ENCODE measurements at regions of chr18 and their contacts with region 1.

Region 1: GRCh38 chr18:12552884-12553242 is 105.0 kb downstream of the SPIRE1 start:
- DNase-seq: no peak
- ATAC-seq: peak in 3 of 4 donors; percentile 25 to 40 (median 30)
- H3K4me3 ChIP-seq: no peak overlapping the region
- H3K27ac ChIP-seq: peak overlapping the region; percentile 19 to 57 (median 38)
- H3K4me1 ChIP-seq: no peaks in the 10 kb centered on the region
- H3K27me3 ChIP-seq: no peaks in the 10 kb centered on the region
- CTCF ChIP-seq: no peak
- POLR2A ChIP-seq: no peak

Region 2: DNA sequence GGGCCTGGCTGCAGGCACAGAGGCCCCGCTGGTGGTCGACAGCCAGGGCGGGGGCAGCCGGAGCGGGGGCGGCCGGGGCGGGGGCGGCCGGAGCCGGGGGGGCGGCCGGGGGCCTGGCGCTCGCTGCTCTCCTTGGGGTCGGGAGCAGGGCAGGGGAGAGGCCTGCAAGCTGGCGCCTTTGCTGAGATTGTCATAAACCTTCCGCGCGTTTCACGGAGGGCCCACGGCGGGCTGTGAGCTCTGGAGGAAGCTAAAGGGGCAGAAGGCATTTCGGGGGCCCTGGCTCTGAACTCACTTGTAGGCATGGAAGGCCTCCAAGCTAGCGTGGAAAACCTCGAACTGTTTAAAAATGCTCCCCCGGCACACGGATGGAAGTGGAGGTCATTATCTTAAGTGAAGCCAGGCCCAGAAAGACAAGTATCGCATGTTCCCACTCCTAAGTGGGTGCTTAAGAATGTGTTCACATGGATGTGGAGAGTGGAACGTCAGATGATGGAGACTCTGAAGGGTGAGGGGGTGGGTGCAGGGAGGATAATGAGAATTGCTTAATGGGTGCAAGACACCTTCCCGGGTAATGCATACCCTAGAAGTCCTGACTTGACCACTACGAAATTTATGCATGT is 144.5 kb before region 1 on chr18:
- intact Hi-C with region 1: no loop called
- DNase-seq: no peak
- ATAC-seq: no peak
- H3K4me3 ChIP-seq: peak overlapping the region in 2 of 3 donors; percentile 41 to 50
- H3K27ac ChIP-seq: peak overlapping the region in 2 of 3 donors; percentile 12 to 47
- H3K4me1 ChIP-seq: peaks cover 0 to 3% (median 0%) of the 10 kb centered on the region in 4 donors
- H3K27me3 ChIP-seq: no peaks in the 10 kb centered on the region
- CTCF ChIP-seq: no peak
- POLR2A ChIP-seq: no peak

Region 3: DNA sequence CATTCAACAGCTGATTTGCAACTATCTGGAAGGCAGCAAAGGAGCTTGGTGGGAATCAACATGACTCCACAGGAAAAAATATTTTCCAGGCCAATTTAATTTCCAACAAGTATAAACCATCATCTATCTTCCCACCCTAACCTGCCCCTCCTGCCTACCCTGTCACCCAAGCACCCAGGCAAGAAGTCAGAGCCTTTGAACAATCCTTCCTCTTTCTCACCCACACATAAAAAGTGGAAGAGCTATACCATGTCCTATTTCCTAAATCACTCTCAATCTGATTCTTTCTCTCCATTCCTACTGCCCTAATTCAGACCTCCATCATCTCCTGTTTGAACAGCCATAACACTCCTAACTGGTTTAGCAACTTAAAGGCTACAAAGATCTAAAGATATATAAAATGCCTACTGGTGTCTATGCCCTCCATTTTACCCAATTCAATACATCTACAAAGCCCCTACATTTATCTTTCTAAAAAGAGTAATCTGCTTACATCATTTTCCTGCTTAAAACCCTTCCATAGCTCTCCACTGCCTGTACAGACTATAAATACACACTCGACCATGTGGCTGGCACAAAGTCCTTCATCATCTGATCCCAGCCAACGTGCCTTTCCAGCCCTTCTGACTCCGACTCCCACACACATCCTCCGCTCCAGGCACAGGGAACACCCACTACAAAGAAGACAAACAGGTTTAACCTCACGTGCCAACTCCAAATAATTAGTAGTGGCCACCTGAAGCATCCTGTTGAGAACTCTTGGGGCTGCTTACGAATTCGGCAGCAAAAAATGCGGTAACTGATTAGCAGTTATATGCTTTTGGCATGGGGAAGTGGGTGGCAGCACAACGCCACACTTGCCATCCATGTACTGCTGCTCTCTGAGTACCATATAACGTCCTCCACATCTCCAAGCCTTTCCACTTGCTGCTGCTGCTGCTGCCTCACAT is 92.7 kb after region 1 on chr18:
- intact Hi-C with region 1: loop called in 1 of 2 experiments (anchors 10 kb)
- DNase-seq: peak in 1 of 3 donors; percentile 62
- ATAC-seq: peak in 3 of 4 donors; percentile 56 to 85 (median 83)
- H3K4me3 ChIP-seq: no peak overlapping the region
- H3K27ac ChIP-seq: no peak overlapping the region
- H3K4me1 ChIP-seq: no peaks in the 10 kb centered on the region
- H3K27me3 ChIP-seq: no peaks in the 10 kb centered on the region
- CTCF ChIP-seq: no peak
- POLR2A ChIP-seq: no peak

Region 4: DNA sequence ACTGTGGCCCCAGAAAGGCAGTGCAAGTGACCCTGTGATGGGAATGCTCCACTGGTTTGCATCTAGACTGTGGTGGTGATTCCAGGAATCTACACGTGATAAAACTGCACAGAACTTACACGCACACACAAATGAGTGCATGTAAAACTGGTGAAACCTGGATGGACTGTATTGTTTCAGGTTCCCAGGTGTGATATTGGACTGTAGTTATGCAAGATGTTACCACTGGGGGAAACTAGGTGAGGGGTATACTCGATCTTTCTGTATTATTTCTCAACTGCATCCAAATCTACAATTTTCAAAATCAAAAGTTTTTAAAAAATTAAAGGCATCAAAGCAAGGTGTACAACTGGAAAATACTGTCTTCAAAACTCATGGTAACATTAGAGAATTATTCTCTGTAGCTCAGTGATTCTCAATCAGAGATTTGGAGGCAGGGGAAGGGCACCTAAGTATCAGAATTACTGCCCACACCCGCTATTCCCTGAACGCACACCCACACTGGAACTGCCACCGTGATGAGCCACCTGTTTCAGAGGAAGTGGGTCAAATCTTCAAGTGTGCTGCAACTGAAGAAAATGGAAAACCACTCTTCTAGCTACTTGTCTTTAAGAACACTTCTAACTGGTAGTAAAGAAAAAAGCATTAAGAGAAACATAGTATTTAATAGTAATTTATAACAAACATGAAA is 304.5 kb after region 1 on chr18:
- intact Hi-C with region 1: no loop called
- DNase-seq: no peak
- ATAC-seq: no peak
- H3K4me3 ChIP-seq: no peak overlapping the region
- H3K27ac ChIP-seq: no peak overlapping the region
- H3K4me1 ChIP-seq: no peaks in the 10 kb centered on the region
- H3K27me3 ChIP-seq: no peaks in the 10 kb centered on the region
- CTCF ChIP-seq: no peak
- POLR2A ChIP-seq: no peak